ENCODE measurements at regions of chrX and their contacts with region 1.

Region 1: DNA sequence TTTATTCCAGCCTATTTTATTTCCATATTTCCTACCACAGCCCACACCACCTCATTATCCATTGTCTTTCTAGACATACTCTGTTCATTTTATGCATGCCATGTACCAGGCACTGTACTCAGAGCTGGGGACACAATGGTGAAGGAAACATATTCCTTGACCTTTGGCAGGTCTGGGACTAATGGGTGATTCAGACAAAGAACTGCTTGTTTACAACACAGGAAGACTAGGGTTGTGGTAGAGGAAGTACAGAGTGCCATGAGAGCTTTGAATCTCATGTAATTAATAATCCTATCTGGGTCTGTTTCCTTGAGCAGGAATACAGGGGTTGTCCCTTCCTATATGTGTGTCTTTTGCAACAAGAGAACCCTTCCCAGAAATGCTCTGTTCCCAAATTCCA is 75.1 kb upstream of the NUDT10 start:
- DNase-seq: no peak
- ATAC-seq: no peak
- H3K4me3 ChIP-seq: no peak overlapping the region
- H3K27ac ChIP-seq: no peak overlapping the region
- H3K4me1 ChIP-seq: no peaks in the 10 kb centered on the region
- H3K27me3 ChIP-seq: peaks cover 0 to 5% (median 0%) of the 10 kb centered on the region in 7 donors
- CTCF ChIP-seq: no peak

Region 2: DNA sequence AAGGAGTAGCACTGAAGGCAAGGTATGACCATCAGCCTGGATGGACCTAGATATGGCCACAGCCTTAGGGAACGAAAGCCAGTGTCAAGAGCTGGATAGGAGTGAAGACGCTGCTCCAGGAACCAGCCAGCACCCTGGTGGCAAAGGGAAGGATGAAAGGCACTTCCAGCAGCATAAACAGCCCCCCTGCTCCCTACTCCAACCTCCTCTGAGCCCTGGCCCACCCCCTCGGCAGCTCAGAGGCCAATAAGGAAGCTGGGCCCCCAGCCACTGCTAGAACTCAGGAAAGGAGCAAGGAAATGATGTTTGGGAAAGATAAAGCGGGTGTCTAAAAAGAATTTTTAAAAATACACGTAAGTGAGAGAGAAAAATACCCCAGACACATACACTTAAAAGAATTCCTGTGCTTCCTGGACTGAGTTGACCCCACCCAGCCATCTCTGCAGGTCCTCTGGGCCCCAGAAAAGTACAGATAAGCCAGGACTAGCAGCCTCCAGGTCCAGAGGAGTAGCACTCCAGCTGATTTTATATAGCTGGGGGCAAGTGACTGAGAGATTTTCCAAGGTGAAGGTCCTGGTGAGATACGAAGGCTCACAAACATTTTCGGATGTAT is 613.9 kb before region 1 on chrX:
- intact Hi-C with region 1: no loop called
- DNase-seq: peak; percentile 34 to 43
- ATAC-seq: peak; percentile 75 to 89 (median 84)
- H3K4me3 ChIP-seq: peak overlapping the region; percentile 14 to 56 (median 44)
- H3K27ac ChIP-seq: peak overlapping the region in 9 of 10 donors; percentile 50 to 80 (median 68)
- H3K4me1 ChIP-seq: peaks cover 0 to 36% (median 12%) of the 10 kb centered on the region in 9 donors
- H3K27me3 ChIP-seq: peaks cover 0 to under 1% (median 0%) of the 10 kb centered on the region in 7 donors
- CTCF ChIP-seq: no peak

Region 3: DNA sequence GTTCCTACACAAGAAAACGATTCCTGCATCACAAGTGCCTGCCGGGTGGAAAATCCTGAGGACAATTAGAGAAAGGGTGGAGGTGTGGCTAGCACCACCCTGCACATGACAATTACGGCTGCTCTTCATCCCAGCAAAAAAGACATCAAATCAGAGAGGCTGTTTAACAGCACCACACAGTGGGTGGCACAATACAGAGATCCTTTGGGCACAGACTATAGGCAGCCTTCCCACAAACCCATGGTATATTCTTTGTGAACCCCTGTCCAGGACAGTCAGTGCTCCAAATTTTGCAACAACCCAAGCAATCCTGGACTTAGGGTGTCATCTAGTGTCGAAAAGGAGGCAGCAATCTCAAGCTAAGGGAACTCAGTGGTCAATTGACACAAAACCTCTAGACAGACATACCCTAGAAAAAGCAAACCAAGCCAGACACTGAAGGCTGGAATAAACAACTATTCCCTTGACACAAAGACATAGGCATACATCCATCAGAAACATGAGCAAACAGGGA is 209.6 kb before region 1 on chrX:
- intact Hi-C with region 1: no loop called
- DNase-seq: no peak
- ATAC-seq: no peak
- H3K4me3 ChIP-seq: no peak overlapping the region
- H3K27ac ChIP-seq: no peak overlapping the region
- H3K4me1 ChIP-seq: no peaks in the 10 kb centered on the region
- H3K27me3 ChIP-seq: peaks cover 0 to 74% (median 0%) of the 10 kb centered on the region in 7 donors
- CTCF ChIP-seq: no peak

Region 4: GRCh38 chrX:51144852-51145442 is 112.5 kb before region 1 on chrX:
- intact Hi-C with region 1: no loop called
- DNase-seq: no peak
- ATAC-seq: no peak
- H3K4me3 ChIP-seq: no peak overlapping the region
- H3K27ac ChIP-seq: no peak overlapping the region
- H3K4me1 ChIP-seq: no peaks in the 10 kb centered on the region
- H3K27me3 ChIP-seq: peaks cover 0 to 81% (median 0%) of the 10 kb centered on the region in 7 donors
- CTCF ChIP-seq: peak in 8 of 9 donors; percentile 7 to 67 (median 46)

Region 5: GRCh38 chrX:51192104-51192503 is 65.4 kb before region 1 on chrX:
- intact Hi-C with region 1: loop called in 1 of 10 experiments (anchors 10 kb)
- DNase-seq: no peak
- ATAC-seq: no peak
- H3K4me3 ChIP-seq: no peak overlapping the region
- H3K27ac ChIP-seq: no peak overlapping the region
- H3K4me1 ChIP-seq: no peaks in the 10 kb centered on the region
- H3K27me3 ChIP-seq: peaks cover 0 to 9% (median 0%) of the 10 kb centered on the region in 7 donors
- CTCF ChIP-seq: no peak

Region 6: GRCh38 chrX:51463322-51463721 is 205.8 kb after region 1 on chrX:
- intact Hi-C with region 1: no loop called
- DNase-seq: no peak
- ATAC-seq: no peak
- H3K4me3 ChIP-seq: no peak overlapping the region
- H3K27ac ChIP-seq: no peak overlapping the region
- H3K4me1 ChIP-seq: no peaks in the 10 kb centered on the region
- H3K27me3 ChIP-seq: peaks cover 0 to 51% (median 0%) of the 10 kb centered on the region in 7 donors
- CTCF ChIP-seq: no peak